Activated T-helper 1 cell treated with anti-CD3 and anti-CD28 coated beads, Interleukin-12 subunit alpha, Interleukin-12 subunit beta, Interleukin-2, Interleukin-4 antibody, amounts not matched to agents 30 ng/mL and 10 ng/mL and 1 ng/mL, durations not matched to agents 14 hours and 24 hours and 36 hours (primary cell): ENCODE measurements at regions of chr2 and their contacts with region 1.

Region 1: DNA sequence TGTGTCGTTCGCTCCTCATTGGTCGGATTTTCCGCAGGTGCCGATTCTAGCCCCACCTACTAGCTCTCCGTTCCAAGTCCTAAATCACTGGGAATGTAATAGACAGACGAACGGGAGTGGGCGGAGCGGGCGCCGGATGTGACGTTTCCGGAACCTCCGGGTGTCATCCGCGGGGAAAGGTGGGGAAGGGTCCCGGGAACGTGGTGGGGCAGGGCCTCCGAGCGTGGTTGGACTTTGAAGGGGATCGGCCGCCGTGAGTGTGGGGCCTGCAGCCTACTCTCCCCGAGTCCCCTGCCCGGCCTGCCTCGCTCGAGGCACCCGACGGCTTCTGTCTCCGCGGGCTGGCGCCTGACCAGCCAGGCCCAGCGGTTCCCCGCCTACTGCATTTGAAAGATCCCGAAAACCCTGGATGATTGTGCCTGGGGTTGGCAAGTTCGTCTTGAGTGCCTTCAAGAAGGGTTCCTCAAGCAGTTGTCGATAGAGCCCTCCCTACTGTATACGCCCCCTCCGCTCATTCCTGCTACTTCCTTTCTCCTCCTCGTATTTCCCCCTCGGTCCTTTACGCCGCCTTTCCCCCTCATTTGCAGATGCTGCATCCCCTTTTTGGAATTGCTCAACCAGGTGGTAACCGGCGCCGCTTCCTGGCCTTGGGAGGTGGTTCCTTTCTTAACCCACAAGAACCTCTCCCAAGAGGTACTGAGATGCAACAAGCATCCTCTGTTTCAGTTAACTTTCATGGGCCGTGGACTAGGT is at the start of gene STAMBP:
- DNase-seq: peak; percentile 90
- H3K4me3 Mint-ChIP-seq: peak within 1 kb of the TSS; percentile 98
- H3K27ac Mint-ChIP-seq: peak within 1 kb of the TSS; percentile 99
- H3K4me1 Mint-ChIP-seq: peaks cover 59% of the 10 kb centered on the region
- H3K27me3 Mint-ChIP-seq: peaks cover 5% of the 10 kb centered on the region
- total RNA-seq, gene STAMBP: 50.8 and 56.0 TPM in 2 replicates

Region 2: GRCh38 chr2:73852020-73852419 is 23.0 kb after region 1 on chr2:
- intact Hi-C with region 1: loop called (anchors 1 kb)
- DNase-seq: no peak
- H3K4me3 Mint-ChIP-seq: no peak overlapping the region
- H3K27ac Mint-ChIP-seq: no peak overlapping the region
- H3K4me1 Mint-ChIP-seq: peaks cover 20% of the 10 kb centered on the region
- H3K27me3 Mint-ChIP-seq: no peaks in the 10 kb centered on the region

Region 3: DNA sequence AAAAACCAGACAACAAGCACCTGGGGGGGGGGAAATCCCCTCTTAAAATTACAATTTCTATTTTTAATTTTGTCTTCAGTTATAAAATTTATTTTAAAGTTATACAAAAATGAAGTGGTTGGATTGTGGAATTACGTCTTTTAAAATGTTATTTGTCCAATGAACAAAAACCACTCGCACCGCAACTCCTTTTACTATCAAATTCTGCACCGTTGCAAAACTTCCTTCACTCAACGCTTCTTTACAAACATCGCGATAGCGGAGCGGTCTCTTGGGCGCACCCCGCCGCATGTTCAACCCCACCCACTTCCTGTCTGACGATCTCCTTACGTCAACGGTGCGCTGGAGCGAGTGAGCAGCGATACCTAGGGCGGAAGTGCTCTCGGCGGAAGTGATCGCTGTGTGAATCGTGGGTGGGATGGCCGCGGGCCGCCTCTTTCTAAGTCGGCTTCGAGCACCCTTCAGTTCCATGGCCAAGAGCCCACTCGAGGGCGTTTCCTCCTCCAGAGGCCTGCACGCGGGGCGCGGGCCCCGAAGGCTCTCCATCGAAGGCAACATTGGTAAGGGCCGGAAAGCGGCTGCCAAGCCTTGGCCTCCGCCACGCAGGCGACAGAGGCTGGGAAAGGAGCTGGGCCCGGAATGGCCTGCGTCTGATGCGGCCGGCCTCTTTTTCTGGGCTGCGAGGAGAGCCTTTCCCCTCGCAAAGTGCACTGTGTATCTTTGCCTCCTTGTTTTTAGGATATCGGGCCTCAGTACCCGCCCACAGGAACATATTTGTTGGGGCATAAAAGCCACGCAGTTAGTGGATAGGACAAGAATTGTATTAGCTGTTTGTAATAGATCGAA is 97.7 kb after region 1 on chr2 and contains the start of gene DGUOK:
- intact Hi-C with region 1: loop called (anchors 1 kb)
- DNase-seq: peak; percentile 97
- H3K4me3 Mint-ChIP-seq: peak within 1 kb of the TSS; percentile 91
- H3K27ac Mint-ChIP-seq: peak within 1 kb of the TSS; percentile 88
- H3K4me1 Mint-ChIP-seq: peaks cover 56% of the 10 kb centered on the region
- H3K27me3 Mint-ChIP-seq: no peaks in the 10 kb centered on the region
- total RNA-seq, gene DGUOK: 92.8 and 98.0 TPM in 2 replicates

Region 4: DNA sequence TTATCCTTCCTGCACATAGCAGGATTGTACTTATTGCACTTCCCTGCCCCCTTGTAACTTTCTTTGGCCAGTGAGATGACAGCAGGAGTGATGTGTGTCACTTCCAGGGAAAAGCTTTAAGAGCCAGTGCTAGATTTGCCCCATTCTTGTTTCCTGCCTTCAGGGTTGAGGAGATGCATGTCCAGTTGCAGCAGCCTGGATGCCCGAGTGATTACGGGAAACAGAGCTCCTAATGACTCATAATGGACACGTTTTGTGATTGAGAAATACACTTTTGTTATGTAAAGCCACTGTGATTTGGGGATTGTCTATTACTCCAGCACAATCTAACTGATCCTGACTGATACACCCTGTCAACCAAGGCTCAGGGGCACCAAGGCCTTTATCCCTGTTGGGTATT is 150.7 kb after region 1 on chr2:
- intact Hi-C with region 1: loop called (anchors 2 kb)
- DNase-seq: no peak
- H3K4me3 Mint-ChIP-seq: peak overlapping the region; percentile 56
- H3K27ac Mint-ChIP-seq: peak overlapping the region; percentile 65
- H3K4me1 Mint-ChIP-seq: peaks cover 67% of the 10 kb centered on the region
- H3K27me3 Mint-ChIP-seq: peaks cover 22% of the 10 kb centered on the region

Region 5: DNA sequence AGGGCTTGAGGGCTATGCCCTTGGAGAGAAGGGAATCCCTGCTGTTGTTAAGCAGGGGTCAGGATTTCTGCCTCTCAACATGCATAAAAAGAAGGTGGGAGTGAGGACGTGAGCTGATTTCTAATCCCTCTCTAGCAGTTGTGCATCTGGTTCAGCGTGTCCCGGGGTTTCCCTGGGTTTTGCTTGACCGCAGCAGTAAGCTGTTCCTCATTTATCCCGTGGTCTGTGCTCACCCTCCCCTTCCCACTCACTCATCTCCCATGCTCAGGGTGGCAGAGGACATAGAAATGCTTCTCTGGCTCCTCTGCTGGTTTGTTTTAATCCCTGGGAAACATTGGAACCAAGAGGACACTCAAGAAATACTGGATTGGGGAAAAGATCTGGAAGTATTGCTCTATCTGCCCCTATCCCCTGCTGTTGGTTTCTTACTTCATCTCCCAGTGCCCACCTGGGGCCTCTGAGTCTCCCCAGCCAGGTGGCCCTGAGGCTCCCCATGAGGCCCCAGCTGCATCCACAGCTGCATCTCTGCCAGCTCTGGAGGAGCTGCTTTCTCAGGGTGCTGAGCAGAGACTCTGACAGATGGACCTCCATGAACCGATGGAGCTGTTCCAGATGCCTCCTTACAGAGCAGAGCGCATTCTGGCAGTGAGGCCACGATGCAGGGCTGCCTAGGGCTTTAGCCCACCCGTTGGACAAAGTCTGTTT is 191.9 kb after region 1 on chr2:
- intact Hi-C with region 1: no loop called
- DNase-seq: no peak
- H3K4me3 Mint-ChIP-seq: no peak overlapping the region
- H3K27ac Mint-ChIP-seq: no peak overlapping the region
- H3K4me1 Mint-ChIP-seq: peaks cover 31% of the 10 kb centered on the region
- H3K27me3 Mint-ChIP-seq: no peaks in the 10 kb centered on the region

Region 6: DNA sequence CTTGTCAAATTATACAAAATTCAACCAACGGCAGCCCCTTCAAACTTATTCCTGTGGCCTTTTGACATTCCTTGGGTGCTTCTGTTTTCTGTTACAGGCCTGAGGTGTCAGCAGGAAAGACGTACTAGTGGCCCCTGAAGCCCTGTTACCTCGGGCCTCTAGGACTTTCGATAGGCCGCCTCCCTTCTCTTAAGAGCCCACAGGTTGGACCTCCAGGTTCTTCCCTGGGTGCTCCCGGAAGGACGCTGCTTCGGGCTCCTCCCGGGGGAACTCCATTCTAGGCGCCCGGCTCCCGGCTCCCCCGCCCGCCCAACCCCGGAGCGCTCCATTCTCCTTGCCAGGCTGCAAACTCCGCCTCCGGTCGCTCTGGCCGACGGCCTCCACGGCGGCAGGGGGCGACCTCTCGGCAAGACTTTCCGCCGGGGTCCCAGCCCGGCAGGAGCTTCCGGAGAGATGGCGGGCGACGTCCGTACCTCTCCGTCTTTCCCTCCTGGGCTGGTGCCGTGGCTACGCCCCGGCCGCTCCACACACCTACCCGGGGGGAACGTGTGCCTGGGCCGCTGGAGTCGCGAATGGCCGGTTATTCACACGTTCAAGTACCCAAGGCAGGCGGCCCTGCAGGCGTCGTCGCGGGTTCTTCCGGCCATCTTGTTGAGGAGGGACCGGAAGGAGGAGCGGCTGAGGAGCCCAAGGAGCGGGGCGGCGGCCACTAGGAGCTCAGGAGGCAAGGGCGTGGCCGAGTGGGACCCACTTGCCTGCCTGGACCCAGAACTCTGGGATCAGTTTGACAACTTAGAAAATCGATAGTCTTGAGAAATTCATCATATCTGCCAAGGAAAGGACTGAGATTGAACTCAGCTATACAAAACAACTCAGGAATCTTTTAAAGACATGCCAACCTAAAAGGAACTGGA is 291.2 kb after region 1 on chr2:
- intact Hi-C with region 1: loop called (anchors 1 kb)
- DNase-seq: peak; percentile 82
- H3K4me3 Mint-ChIP-seq: peak overlapping the region; percentile 82
- H3K27ac Mint-ChIP-seq: peak overlapping the region; percentile 88
- H3K4me1 Mint-ChIP-seq: peaks cover 7% of the 10 kb centered on the region
- H3K27me3 Mint-ChIP-seq: peaks cover 12% of the 10 kb centered on the region

Region 7: DNA sequence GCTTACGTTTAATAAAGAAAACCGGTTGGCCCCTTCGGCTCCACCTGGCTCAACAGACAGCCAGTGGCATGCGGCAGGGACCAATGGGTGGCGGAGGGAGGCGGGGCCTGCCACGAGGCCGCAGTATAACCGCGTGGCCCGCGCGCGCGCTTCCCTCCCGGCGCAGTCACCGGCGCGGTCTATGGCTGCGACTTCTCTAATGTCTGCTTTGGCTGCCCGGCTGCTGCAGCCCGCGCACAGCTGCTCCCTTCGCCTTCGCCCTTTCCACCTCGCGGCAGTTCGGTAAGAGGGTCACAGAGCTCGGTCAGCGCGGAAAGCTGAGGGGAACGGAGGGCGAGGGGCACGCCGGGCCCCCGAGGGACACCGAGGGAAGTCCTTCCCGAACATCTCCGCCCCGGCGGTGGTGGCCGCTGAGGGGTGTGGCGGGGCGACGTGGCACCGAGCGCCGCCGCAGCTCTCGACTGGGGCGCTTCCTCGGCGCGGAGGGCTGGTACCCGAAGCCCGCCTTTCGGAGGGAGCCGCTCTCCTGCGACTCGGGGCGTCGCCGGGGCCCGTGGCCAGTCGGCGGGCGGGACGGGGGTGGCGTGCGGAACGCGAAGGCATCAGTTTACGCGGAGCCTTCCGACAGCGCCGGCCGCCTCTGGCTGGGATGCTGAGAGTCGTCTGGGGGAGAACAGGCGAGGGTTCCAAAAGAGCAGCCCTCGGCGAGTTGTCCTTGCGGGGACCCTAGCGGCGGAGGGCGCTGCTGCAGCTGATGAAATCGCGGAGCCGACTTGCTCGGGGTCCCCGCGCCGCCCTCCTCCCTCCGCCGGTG is 369.7 kb after region 1 on chr2 and contains the start of gene MTHFD2:
- intact Hi-C with region 1: loop called (anchors 1 kb)
- DNase-seq: peak; percentile 91
- H3K4me3 Mint-ChIP-seq: peak within 1 kb of the TSS; percentile 98
- H3K27ac Mint-ChIP-seq: peak within 1 kb of the TSS; percentile 100
- H3K4me1 Mint-ChIP-seq: peaks cover 59% of the 10 kb centered on the region
- H3K27me3 Mint-ChIP-seq: no peaks in the 10 kb centered on the region
- total RNA-seq, gene MTHFD2: 437 and 457 TPM in 2 replicates